Lower leg skin (tissue), 4 donors: ENCODE measurements at regions of chr1 and their contacts with region 1.

Region 1: DNA sequence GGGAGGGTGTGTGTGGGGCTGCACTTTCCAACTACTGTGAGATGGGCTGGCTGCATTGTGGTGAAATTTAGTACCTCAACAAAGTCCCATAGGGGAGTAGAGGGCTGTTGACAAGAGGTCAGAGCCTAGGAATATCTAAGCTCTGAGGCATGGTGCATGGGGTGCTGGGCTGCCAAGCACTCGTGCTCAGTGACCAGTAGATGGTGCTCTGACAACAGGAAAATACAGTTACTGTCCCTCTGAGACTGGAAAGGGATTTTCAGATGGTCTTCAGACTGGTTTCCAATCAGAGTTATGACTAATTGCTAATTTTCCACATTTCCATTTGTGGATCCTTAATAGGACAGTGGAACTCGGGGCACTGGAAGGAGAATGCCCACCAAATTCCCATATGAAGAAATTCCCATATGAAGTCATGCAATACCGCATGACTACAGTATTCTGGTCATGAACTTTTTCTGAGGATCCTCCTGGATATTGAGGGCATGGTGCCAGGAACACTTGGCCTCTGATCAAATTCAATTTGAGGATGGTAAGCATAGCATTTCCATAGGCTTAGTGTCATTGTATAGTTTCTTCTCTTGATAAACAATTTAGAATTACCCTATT is 4.1 kb upstream of the CACNA1E start:
- DNase-seq: no peak
- H3K4me3 ChIP-seq: no peak overlapping the region
- CTCF ChIP-seq: no peak
- POLR2A ChIP-seq: no peak

Region 2: DNA sequence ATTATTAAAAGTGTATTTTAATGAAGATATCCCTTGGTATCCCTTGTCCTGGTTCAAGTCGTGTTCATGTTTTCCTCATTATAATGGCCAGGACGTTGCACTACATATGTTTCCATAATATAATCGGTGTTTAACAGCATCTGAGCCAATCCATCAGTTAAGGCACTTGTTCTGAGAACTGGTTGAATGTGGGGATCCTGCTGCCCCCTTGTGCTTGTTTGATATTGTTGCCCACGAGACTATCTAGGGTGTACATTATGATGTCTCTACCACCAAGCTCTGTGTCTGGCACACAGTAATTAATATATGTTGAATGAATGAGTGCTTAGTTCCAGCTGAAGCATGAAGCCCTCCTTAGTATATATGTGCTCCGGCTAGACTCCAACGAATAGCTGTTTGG is 197.0 kb after region 1 on chr1:
- intact Hi-C with region 1: loop called (anchors 10 kb)
- DNase-seq: no peak
- H3K4me3 ChIP-seq: no peak overlapping the region
- CTCF ChIP-seq: no peak
- POLR2A ChIP-seq: no peak

Region 3: DNA sequence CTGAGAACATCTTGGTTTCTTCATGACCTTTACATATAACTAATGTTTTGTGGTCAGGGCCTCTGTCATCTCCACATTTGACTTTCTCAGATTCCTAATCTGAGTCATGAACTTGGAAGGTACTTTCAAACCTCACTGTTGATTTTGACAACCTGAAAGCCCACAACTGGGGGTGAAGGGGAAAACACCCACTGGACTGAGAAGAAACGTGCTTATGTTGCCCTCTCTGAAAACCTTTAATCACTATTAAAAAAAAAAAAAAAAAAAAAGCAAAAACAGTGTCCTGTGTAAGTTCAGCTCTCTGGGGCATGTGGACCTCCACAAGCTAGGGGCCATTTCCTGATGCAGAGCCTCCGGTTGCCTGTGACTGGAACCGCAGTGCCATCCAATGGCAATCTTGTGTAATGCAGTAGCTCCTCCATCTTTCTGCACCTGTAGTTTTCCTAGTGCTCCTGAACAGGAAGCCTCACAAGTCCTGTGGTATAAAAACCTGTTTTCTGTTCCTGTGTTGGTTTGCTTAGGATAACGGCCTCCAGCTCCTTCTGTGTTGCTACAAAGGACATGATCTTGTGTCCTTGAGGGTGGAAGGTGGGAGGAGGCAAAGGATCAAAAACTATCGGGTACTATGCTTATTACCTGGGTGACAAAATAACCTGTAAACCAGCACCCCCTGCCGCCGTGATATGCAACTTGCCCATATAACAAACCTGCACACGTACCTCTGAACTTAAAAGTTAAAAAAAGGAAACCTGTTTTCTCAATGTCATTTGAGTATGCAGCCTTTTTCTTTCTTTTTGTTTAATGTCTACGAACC is 457.7 kb after region 1 on chr1:
- intact Hi-C with region 1: loop called (anchors 10 kb)
- DNase-seq: peak in 1 of 2 donors; percentile 23
- H3K4me3 ChIP-seq: no peak overlapping the region
- CTCF ChIP-seq: no peak
- POLR2A ChIP-seq: no peak

Region 4: DNA sequence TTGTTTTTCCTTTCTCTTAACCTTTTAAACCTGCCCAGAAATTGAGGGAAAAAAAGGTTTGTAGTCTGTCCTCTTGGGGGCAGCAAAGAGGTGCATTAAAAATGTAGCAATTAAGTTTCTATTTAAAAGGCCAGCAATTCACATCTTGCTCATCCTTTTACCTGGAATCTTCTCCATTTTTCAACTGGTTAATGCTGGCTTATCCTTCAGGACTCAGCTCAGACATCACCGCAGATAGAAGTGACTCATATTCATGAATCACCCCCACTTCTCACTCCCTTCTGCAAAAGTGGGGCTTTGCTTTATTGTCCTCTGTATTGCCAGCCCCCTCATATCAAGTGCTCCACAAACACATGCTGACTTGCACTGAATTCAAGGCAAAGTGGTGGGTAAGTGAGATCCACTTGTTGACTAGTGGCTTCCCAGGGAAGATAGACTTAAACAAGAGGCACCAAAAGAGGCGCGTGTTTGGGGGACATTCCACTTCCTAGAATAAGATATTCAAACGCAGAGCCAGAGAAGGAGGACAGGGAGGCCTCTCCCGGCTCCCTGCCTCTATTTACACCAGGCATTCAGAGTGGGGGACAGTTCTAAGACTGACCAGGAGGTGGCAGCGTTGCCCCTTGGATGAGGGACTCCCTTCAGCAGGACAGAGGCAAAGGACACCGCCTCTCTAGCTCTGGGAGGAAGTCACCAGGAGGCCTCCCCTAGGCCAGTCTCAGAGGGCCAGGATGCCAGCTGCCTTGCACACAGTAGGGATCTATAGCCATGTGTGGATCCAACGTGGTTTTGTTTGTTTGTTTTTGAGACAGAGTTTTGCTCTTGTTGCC is 605.5 kb after region 1 on chr1:
- intact Hi-C with region 1: loop called (anchors 5 kb)
- DNase-seq: peak; percentile 92 to 98
- H3K4me3 ChIP-seq: no peak overlapping the region
- CTCF ChIP-seq: peak in 2 of 3 donors; percentile 53 to 89
- POLR2A ChIP-seq: no peak